ENCODE measurements at regions of chr10 and their contacts with region 1.

Region 1: DNA sequence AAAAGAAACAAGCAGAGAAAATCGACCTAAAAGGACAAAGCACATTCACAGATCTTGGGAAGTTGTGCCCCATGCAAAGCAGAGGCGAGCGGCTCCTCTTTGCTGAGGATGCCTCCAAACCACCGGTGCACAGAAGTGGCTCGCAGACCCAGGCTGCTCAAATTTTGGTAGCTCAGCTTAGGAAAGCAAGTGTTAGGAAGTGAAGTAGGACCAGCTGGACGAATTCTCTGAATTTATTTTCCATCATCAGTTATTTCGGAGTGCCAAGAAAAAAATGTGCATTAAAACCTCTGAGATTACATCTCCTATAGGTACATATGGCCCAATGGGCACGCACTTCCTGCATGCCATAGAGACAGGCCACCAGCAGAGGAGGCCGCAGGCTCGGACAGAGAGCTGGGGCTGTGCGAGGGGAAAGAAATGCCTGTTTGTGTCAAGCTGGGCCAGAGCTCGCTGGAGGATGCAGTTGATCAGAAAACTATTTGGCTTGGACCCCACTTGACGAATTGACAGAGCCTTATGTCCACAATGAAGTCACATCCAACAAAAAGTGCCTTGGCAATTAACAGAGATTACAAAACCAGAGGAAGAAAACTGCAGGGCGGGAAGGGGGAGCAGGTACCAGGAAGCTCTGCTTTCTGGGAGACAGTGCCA is 122.3 kb upstream of the LYZL2 start:
- DNase-seq: peak; percentile 87
- H3K4me3 Mint-ChIP-seq: no peak overlapping the region
- H3K27ac Mint-ChIP-seq: no peak overlapping the region
- H3K4me1 Mint-ChIP-seq: no peaks in the 10 kb centered on the region
- H3K27me3 Mint-ChIP-seq: peaks cover 14% of the 10 kb centered on the region
- CTCF ChIP-seq: peak; percentile 97

Region 2: GRCh38 chr10:30792025-30792424 is 40.2 kb after region 1 on chr10:
- CTCF ChIA-PET with region 1: no interaction called
- intact Hi-C with region 1: no loop called
- DNase-seq: no peak
- H3K4me3 Mint-ChIP-seq: no peak overlapping the region
- H3K27ac Mint-ChIP-seq: no peak overlapping the region
- H3K4me1 Mint-ChIP-seq: no peaks in the 10 kb centered on the region
- H3K27me3 Mint-ChIP-seq: no peaks in the 10 kb centered on the region
- CTCF ChIP-seq: no peak

Region 3: GRCh38 chr10:30963992-30964930 is 212.5 kb after region 1 on chr10:
- CTCF ChIA-PET with region 1: no interaction called
- intact Hi-C with region 1: no loop called
- DNase-seq: no peak
- H3K4me3 Mint-ChIP-seq: peak overlapping the region; percentile 12
- H3K27ac Mint-ChIP-seq: peak overlapping the region; percentile 60
- H3K4me1 Mint-ChIP-seq: peaks cover 24% of the 10 kb centered on the region
- H3K27me3 Mint-ChIP-seq: no peaks in the 10 kb centered on the region
- CTCF ChIP-seq: no peak

Region 4: DNA sequence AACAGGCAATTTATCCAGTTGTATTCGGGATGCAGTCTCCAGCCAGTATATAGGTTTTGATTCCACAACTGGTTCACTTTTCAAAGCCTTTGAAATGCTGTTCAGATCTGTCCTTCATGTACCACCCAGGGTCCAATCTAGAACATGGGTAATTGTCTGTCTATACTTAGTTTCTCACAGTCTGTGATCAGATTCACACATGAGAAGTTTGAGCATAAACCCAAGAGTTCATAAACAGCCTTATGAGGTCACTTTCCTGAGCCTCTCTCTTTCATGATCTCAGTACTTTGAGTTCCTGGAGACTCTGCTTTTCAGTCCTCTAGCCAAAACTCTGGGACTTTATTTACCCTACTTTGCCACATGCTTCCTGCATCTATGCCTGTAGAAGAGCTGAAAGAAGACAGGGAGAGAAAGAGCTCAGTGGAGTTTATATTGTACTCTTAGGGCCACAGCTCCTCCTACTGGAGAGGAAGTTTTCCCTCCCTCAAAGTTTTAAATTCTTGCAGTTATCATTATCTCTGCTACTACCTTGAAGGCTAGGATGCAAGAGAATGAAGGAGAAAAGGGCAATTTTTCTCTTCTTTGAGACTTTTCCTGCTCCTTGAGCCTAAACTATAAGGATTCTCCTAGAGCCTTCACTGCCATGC is 739.2 kb after region 1 on chr10:
- CTCF ChIA-PET with region 1: interaction called, 35 read pairs
- intact Hi-C with region 1: loop called (anchors 5 kb)
- DNase-seq: peak; percentile 37
- H3K4me3 Mint-ChIP-seq: no peak overlapping the region
- H3K27ac Mint-ChIP-seq: no peak overlapping the region
- H3K4me1 Mint-ChIP-seq: no peaks in the 10 kb centered on the region
- H3K27me3 Mint-ChIP-seq: no peaks in the 10 kb centered on the region
- CTCF ChIP-seq: peak; percentile 57

Region 5: DNA sequence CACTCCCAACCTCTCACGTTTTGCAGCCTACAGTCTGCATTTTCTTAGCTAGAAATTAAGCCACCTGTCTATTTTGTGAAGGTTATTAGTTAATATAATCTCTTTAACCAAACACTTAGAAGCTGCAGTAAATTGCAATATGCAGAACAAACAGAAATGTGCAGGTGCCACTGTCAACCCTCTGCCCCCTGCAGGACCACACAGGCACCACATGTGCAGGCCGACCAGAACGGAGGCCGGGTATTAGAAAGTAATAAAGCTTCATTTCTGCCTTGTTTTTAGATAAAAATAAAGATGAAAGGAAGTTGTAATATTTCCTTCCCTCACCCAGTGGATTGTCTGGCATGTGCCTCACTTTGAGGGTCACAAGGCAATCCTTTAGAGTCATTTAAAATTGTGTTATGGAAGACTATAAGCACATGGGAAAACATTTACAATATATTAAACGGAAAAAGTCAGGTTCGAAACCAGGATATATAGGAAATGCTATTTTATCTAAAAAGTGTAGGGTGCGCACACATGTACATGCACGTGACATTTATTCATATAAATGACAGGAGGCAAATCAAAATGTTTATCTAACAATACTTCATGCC is 1018.6 kb after region 1 on chr10:
- CTCF ChIA-PET with region 1: interaction called, 13 read pairs
- intact Hi-C with region 1: loop called (anchors 1 kb)
- DNase-seq: peak; percentile 76
- H3K4me3 Mint-ChIP-seq: no peak overlapping the region
- H3K27ac Mint-ChIP-seq: no peak overlapping the region
- H3K4me1 Mint-ChIP-seq: no peaks in the 10 kb centered on the region
- H3K27me3 Mint-ChIP-seq: no peaks in the 10 kb centered on the region
- CTCF ChIP-seq: peak; percentile 80

Region 6: GRCh38 chr10:31808258-31809218 is 1056.7 kb after region 1 on chr10:
- CTCF ChIA-PET with region 1: interaction called, 3 read pairs
- intact Hi-C with region 1: loop called (anchors 5 kb)
- DNase-seq: no peak
- H3K4me3 Mint-ChIP-seq: no peak overlapping the region
- H3K27ac Mint-ChIP-seq: peak overlapping the region; percentile 31
- H3K4me1 Mint-ChIP-seq: no peaks in the 10 kb centered on the region
- H3K27me3 Mint-ChIP-seq: no peaks in the 10 kb centered on the region
- CTCF ChIP-seq: peak; percentile 49

Measured in Calu3 (cell line).